ENCODE measurements at regions of chr2 and their contacts with region 1.

Region 1: GRCh38 chr2:157336137-157337010 is 10.8 kb upstream of the ERMN start:
- DNase-seq: no peak
- H3K4me3 ChIP-seq: no peak overlapping the region
- H3K27ac ChIP-seq: no peak overlapping the region
- H3K27me3 ChIP-seq: no peaks in the 10 kb centered on the region
- CTCF ChIP-seq: peak; percentile 76

Region 2: DNA sequence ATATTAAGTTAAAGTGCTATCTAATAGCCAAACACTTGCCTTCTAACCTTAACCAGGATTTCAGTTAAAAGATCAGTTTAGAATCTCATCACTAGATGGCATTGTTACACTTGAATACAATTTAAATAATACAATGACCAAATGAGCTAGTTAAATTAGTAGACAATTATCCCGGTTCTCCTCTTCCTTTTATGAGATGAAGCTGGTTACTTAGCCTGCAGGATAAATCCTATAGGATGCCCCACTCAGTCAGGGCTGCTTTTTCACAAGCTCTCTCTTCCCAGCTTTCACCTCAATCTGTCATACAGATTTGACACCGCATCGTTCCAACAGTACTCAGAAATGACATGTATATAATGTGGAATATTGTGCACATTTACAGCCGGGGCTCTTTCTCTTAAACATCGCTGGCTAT is 1959.1 kb before region 1 on chr2:
- CTCF ChIA-PET with region 1: interaction called, 36 read pairs
- POLR2A ChIA-PET with region 1: no interaction called
- DNase-seq: no peak
- H3K4me3 ChIP-seq: no peak overlapping the region
- H3K27ac ChIP-seq: no peak overlapping the region
- H3K27me3 ChIP-seq: no peaks in the 10 kb centered on the region
- CTCF ChIP-seq: 0 out of 2 replicates have a peak, but pooled peaks have one; percentile 33

Region 3: GRCh38 chr2:157124731-157125130 is 211.6 kb before region 1 on chr2:
- CTCF ChIA-PET with region 1: no interaction called
- POLR2A ChIA-PET with region 1: no interaction called
- DNase-seq: no peak
- H3K4me3 ChIP-seq: no peak overlapping the region
- H3K27ac ChIP-seq: no peak overlapping the region
- H3K27me3 ChIP-seq: no peaks in the 10 kb centered on the region
- CTCF ChIP-seq: no peak

Region 4: GRCh38 chr2:157315901-157316300 is 20.5 kb before region 1 on chr2:
- CTCF ChIA-PET with region 1: interaction called, 299 read pairs
- POLR2A ChIA-PET with region 1: no interaction called
- DNase-seq: no peak
- H3K4me3 ChIP-seq: no peak overlapping the region
- H3K27ac ChIP-seq: no peak overlapping the region
- H3K27me3 ChIP-seq: no peaks in the 10 kb centered on the region
- CTCF ChIP-seq: no peak

Region 5: GRCh38 chr2:157349949-157350515 is 13.7 kb after region 1 on chr2:
- CTCF ChIA-PET with region 1: interaction called, 96 read pairs
- POLR2A ChIA-PET with region 1: no interaction called
- DNase-seq: no peak
- H3K4me3 ChIP-seq: no peak overlapping the region
- H3K27ac ChIP-seq: no peak overlapping the region
- H3K27me3 ChIP-seq: no peaks in the 10 kb centered on the region
- CTCF ChIP-seq: no peak

Region 6: GRCh38 chr2:157367704-157368103 is 31.3 kb after region 1 on chr2:
- CTCF ChIA-PET with region 1: interaction called, 12 read pairs
- POLR2A ChIA-PET with region 1: no interaction called
- DNase-seq: no peak
- H3K4me3 ChIP-seq: no peak overlapping the region
- H3K27ac ChIP-seq: no peak overlapping the region
- H3K27me3 ChIP-seq: no peaks in the 10 kb centered on the region
- CTCF ChIP-seq: no peak